Common myeloid progenitor, CD34-positive (primary cell): ENCODE measurements at regions of chr2 and their contacts with region 1.

Region 1: GRCh38 chr2:85712849-85713602 is 18.9 kb downstream of the GNLY start:
- DNase-seq: no peak
- H3K4me3 ChIP-seq: peak overlapping the region in 3 of 7 experiments; percentile 26 to 44 (median 43)
- H3K27ac ChIP-seq: no peak overlapping the region
- H3K4me1 ChIP-seq: peaks cover 20 to 75% (median 52%) of the 10 kb centered on the region in 4 experiments
- H3K27me3 ChIP-seq: no peaks in the 10 kb centered on the region

Region 2: DNA sequence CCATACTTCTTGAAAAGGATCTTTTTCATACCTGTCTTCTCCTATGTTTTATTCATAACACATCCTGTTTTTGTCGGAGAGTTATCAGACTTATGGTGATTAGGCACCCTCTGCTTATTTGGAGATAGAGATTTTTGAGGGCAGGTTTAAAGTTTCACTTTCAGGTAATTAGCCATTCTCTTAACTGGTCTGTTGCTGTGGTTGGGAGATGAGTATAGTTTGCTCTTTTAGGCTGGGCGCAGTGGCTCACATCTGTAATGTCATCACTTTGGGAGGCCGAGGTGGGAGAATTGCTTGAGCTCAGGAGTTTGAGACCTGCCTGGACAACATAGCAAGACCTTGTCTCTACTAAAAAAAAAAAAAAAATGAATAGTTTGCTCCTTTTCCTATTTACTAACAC is 70.3 kb before region 1 on chr2:
- CTCF ChIA-PET with region 1: interaction called, 32 read pairs
- POLR2A ChIA-PET with region 1: no interaction called
- DNase-seq: no peak
- H3K4me3 ChIP-seq: no peak overlapping the region
- H3K27ac ChIP-seq: no peak overlapping the region
- H3K4me1 ChIP-seq: no peaks in the 10 kb centered on the region
- H3K27me3 ChIP-seq: no peaks in the 10 kb centered on the region

Region 3: DNA sequence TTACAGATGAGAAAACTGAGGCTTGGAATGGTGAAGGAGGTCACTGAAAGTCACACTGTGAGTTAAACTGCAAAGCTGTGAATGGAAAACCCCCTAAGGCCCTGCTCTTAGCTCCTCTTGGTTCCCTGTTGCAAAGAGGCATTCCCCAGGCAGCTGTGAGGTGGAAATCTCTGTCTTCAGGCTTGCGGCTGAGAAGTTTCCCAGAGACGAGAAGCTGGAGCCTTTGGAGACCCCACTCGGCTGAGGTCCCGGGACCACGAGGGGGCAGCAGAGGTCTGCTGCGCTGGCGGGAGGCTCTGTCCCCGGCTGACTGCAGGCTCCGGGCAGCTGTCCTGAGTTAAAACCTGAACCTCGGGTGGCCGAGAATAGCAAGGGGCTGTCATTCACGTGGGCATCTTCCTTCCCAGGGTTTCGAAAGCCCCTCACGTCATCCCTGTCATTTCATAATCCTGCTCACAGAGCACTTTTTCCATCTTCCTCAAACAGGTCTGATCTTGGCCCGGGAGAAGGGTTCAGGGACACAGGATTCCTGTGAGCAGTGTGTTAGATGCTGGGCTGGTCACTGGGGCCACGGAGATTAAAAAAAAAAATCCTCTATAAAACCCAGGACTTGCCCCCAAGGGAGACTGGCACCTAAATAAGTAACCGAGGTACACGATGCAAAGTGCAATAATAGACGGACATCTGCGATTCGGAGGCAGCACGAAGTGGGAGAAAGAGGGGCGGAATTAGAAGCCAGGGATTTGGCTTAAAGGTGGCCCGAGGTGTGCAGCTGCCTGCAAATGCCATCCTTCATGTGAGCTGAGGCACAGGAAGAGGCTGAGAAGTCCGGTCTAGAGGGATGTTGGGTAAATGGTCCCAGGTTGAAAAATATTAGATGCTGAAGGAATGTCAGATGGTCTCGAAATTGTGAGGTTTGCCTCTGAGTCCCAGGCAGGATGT is 16.1 kb after region 1 on chr2:
- CTCF ChIA-PET with region 1: interaction called, 10 read pairs
- POLR2A ChIA-PET with region 1: no interaction called
- DNase-seq: peak; percentile 59 to 77 (median 73)
- H3K4me3 ChIP-seq: no peak overlapping the region
- H3K27ac ChIP-seq: no peak overlapping the region
- H3K4me1 ChIP-seq: peaks cover 0 to 10% (median 4%) of the 10 kb centered on the region in 4 experiments
- H3K27me3 ChIP-seq: peaks cover 0 to 5% (median 2%) of the 10 kb centered on the region in 5 experiments

Region 4: DNA sequence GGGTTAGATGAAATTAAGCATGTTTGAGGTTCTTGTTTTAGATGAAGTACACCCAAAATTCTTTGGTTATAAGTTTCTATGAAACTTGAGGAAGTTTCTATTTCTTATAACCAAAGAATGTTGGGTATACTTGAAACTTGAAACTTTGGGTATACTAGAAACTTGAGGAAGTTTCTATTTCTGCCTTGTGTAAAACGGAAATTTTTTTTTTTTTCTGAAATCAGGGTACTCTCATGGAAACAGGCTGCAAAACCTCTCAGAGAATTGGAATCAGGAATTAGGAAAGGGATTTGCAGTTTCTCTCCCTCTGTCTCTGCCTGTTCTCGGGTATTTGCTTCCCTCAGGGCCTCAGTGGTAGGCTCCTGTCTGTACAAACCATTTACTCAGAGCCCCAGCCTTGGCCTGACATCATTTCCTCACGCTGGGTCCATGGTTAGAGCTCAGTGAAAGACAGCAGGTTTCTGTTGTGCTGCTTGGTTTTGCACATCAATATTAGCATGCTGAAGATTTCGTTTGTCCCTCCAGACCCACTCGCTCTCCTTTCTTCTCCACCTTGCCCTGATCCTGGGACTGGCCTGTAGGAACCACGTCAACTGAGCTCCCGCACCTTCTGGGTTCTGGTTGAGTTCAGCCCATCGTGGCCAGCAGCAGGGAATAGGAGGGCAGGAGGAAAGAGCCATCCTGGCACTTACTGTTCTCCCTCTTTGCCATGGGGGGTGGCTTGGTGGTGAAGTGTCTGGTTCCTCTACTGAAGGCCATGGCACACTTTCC is 286.2 kb after region 1 on chr2:
- CTCF ChIA-PET with region 1: no interaction called
- POLR2A ChIA-PET with region 1: no interaction called
- DNase-seq: peak in 2 of 3 donors; percentile 60 to 75
- H3K4me3 ChIP-seq: peak overlapping the region in 3 of 7 experiments; percentile 0 to 42 (median 2)
- H3K27ac ChIP-seq: peak overlapping the region; percentile 5 to 25
- H3K4me1 ChIP-seq: peaks cover 21 to 83% (median 56%) of the 10 kb centered on the region in 4 experiments
- H3K27me3 ChIP-seq: no peaks in the 10 kb centered on the region